Activated naive CD4-positive, alpha-beta T cell treated with anti-CD3 and anti-CD28 coated beads, Interleukin-2, amount 10 ng/mL, durations not matched to agents 7 days and 5 days (primary cell): ENCODE measurements at regions of chr11 and their contacts with region 1.

Region 1: GRCh38 chr11:65540297-65541092 is 15.6 kb downstream of the SCYL1 start:
- DNase-seq: peak; percentile 92
- H3K4me3 Mint-ChIP-seq: peak overlapping the region; percentile 81
- H3K27ac Mint-ChIP-seq: peak overlapping the region; percentile 89
- H3K4me1 Mint-ChIP-seq: peaks cover 20% of the 10 kb centered on the region
- H3K27me3 Mint-ChIP-seq: no peaks in the 10 kb centered on the region

Region 2: GRCh38 chr11:65530157-65530496 is 10.4 kb before region 1 on chr11:
- CTCF ChIA-PET with region 1: interaction called, 15 read pairs
- DNase-seq: peak; percentile 64
- H3K4me3 Mint-ChIP-seq: no peak overlapping the region
- H3K27ac Mint-ChIP-seq: peak overlapping the region; percentile 53
- H3K4me1 Mint-ChIP-seq: peaks cover 40% of the 10 kb centered on the region
- H3K27me3 Mint-ChIP-seq: no peaks in the 10 kb centered on the region

Region 3: GRCh38 chr11:65558002-65558931 is 17.8 kb after region 1 on chr11 and contains the start of gene LTBP3:
- CTCF ChIA-PET with region 1: interaction called, 35 read pairs
- DNase-seq: peak; percentile 61
- H3K4me3 Mint-ChIP-seq: peak within 1 kb of the TSS; percentile 80
- H3K27ac Mint-ChIP-seq: peak within 1 kb of the TSS; percentile 88
- H3K4me1 Mint-ChIP-seq: peaks cover 67% of the 10 kb centered on the region
- H3K27me3 Mint-ChIP-seq: peaks cover 17% of the 10 kb centered on the region

Region 4: DNA sequence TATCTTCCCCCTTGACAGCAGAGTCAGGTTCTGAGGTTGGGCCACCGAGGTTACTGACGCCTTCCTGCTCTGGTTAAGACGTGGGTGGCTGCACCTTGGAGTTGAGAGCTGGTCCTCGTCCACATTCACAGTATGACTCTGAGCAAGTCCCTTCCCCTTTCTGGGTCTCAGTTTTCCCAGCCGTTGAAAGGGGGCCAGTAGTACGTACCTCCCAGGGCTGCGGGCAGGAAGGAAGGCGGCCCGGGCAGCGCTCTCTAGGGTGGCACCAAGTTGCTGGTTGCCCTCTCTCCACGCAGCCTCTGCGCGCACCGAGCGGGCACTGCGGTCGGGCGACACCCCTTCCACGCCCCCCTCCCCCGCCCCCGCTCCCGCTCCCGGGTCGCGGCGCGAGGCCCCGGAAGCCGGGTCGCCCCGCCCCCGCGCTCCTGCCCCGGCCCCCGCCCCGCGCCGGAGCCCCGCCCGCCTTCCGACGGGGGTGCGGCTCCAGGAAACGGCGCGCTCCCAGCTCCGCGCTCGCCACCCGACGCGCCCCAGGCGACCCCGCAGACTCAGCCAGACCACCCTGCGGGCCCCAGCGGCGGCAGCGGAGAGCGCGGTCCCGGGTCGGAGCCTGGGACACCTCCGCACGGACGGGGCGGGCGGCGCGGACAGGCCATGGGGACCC is 35.2 kb after region 1 on chr11 and contains the start of gene EHBP1L1:
- CTCF ChIA-PET with region 1: interaction called, 95 read pairs
- DNase-seq: peak; percentile 88
- H3K4me3 Mint-ChIP-seq: peak within 1 kb of the TSS; percentile 85
- H3K27ac Mint-ChIP-seq: peak within 1 kb of the TSS; percentile 97
- H3K4me1 Mint-ChIP-seq: peaks cover 61% of the 10 kb centered on the region
- H3K27me3 Mint-ChIP-seq: peaks cover 4% of the 10 kb centered on the region

Region 5: GRCh38 chr11:65593518-65594298 is 53.2 kb after region 1 on chr11:
- CTCF ChIA-PET with region 1: interaction called, 48 read pairs
- DNase-seq: peak; percentile 59
- H3K4me3 Mint-ChIP-seq: no peak overlapping the region
- H3K27ac Mint-ChIP-seq: peak overlapping the region; percentile 52
- H3K4me1 Mint-ChIP-seq: peaks cover 30% of the 10 kb centered on the region
- H3K27me3 Mint-ChIP-seq: no peaks in the 10 kb centered on the region